A673 (cell line): ENCODE measurements at regions of chr10 and their contacts with region 1.

Region 1: GRCh38 chr10:89490596-89491335 is 44.6 kb downstream of the SLC16A12 start:
- DNase-seq: no peak
- H3K4me3 ChIP-seq: no peak overlapping the region
- H3K27ac ChIP-seq: no peak overlapping the region
- H3K4me1 ChIP-seq: peaks cover 6% of the 10 kb centered on the region
- H3K27me3 ChIP-seq: no peaks in the 10 kb centered on the region
- CTCF ChIP-seq: no peak

Region 2: GRCh38 chr10:89505606-89506275 is 15.0 kb after region 1 on chr10:
- CTCF ChIA-PET with region 1: no interaction called
- POLR2A ChIA-PET with region 1: interaction called, 12 read pairs
- intact Hi-C with region 1: no loop called
- DNase-seq: no peak
- H3K4me3 ChIP-seq: no peak overlapping the region
- H3K27ac ChIP-seq: no peak overlapping the region
- H3K4me1 ChIP-seq: no peaks in the 10 kb centered on the region
- H3K27me3 ChIP-seq: no peaks in the 10 kb centered on the region
- CTCF ChIP-seq: no peak

Region 3: GRCh38 chr10:90125456-90126255 is 634.9 kb after region 1 on chr10:
- CTCF ChIA-PET with region 1: no interaction called
- POLR2A ChIA-PET with region 1: no interaction called
- intact Hi-C with region 1: no loop called
- DNase-seq: no peak
- H3K4me3 ChIP-seq: no peak overlapping the region
- H3K27ac ChIP-seq: no peak overlapping the region
- H3K4me1 ChIP-seq: no peaks in the 10 kb centered on the region
- H3K27me3 ChIP-seq: no peaks in the 10 kb centered on the region
- CTCF ChIP-seq: no peak

Region 4: GRCh38 chr10:90430186-90430585 is 939.4 kb after region 1 on chr10:
- CTCF ChIA-PET with region 1: no interaction called
- POLR2A ChIA-PET with region 1: no interaction called
- intact Hi-C with region 1: no loop called
- DNase-seq: no peak
- H3K4me3 ChIP-seq: no peak overlapping the region
- H3K27ac ChIP-seq: no peak overlapping the region
- H3K4me1 ChIP-seq: no peaks in the 10 kb centered on the region
- H3K27me3 ChIP-seq: no peaks in the 10 kb centered on the region
- CTCF ChIP-seq: no peak